Activated naive CD4-positive, alpha-beta T cell treated with anti-CD3 and anti-CD28 coated beads for 36 hours (primary cell): ENCODE measurements at regions of chr2 and their contacts with region 1.

Region 1: DNA sequence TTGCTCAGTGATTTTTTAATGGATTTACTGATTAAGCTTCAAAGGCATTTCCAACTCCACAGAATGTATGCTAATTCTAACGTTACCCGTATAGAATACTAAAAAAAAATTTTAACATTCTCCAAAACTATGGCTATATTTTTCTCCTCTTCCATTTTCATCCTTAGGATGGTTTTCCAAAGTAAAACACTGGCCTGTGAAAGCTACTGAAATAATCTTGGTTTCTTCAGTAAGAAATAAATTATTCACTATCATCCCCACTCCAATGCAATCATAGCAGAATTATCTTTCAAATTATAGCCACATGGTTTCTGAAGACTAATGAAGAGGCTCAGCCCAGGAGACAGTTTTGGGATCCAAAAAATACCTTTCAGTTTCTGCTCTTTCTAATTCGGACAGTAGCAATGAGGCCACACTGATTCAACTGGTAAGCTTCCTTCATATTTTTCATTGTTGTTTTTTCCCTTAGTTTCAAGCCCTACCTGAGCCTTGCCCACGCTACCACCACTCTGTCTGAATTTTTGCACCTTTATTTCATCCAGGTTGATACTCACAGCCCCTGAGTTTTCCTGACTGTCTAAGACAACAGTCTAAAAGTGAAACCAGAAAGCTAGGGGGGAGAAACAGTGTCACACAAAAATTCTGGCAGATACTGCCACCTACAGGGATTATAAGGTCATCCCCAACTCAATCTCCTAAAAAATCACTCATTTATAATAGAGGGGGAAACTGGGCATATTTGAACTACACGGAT is 887.9 kb downstream of the NRXN1 start:
- DNase-seq: no peak
- H3K4me3 Mint-ChIP-seq: no peak overlapping the region
- H3K27ac Mint-ChIP-seq: no peak overlapping the region
- H3K4me1 Mint-ChIP-seq: peaks cover 5% of the 10 kb centered on the region
- H3K27me3 Mint-ChIP-seq: no peaks in the 10 kb centered on the region

Region 2: GRCh38 chr2:48600204-48600813 is 1543.7 kb before region 1 on chr2:
- CTCF ChIA-PET with region 1: no interaction called
- intact Hi-C with region 1: loop called (anchors 5 kb)
- DNase-seq: no peak
- H3K4me3 Mint-ChIP-seq: no peak overlapping the region
- H3K27ac Mint-ChIP-seq: no peak overlapping the region
- H3K4me1 Mint-ChIP-seq: no peaks in the 10 kb centered on the region
- H3K27me3 Mint-ChIP-seq: peaks cover 4% of the 10 kb centered on the region

Region 3: GRCh38 chr2:49687918-49688317 is 456.1 kb before region 1 on chr2:
- CTCF ChIA-PET with region 1: interaction called, 3 read pairs
- intact Hi-C with region 1: loop called (anchors 1 kb)
- DNase-seq: no peak
- H3K4me3 Mint-ChIP-seq: no peak overlapping the region
- H3K27ac Mint-ChIP-seq: no peak overlapping the region
- H3K4me1 Mint-ChIP-seq: no peaks in the 10 kb centered on the region
- H3K27me3 Mint-ChIP-seq: no peaks in the 10 kb centered on the region

Region 4: DNA sequence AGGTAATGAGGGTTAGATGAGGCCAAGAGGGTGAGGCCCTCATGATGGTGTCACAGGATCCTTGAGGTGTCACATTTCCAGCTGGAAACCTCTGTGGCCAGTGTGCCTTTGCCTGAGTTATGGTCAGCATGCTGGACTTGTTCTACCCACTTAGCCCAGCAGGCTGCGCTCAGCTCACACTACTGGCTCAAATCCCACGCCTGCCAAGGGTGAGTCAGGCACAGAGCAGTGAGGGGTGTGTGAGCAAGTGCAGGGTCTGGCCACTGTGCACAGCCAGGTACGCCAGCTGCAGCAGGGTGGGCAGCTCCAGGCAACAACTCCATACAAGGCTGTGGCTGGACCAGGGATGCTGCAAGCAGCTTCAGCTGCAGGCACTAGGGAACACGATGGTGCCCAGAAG is 373.1 kb before region 1 on chr2:
- CTCF ChIA-PET with region 1: no interaction called
- intact Hi-C with region 1: loop called (anchors 2 kb)
- DNase-seq: peak; percentile 9
- H3K4me3 Mint-ChIP-seq: no peak overlapping the region
- H3K27ac Mint-ChIP-seq: no peak overlapping the region
- H3K4me1 Mint-ChIP-seq: no peaks in the 10 kb centered on the region
- H3K27me3 Mint-ChIP-seq: no peaks in the 10 kb centered on the region

Region 5: GRCh38 chr2:49807689-49808088 is 336.3 kb before region 1 on chr2:
- CTCF ChIA-PET with region 1: no interaction called
- intact Hi-C with region 1: no loop called
- DNase-seq: no peak
- H3K4me3 Mint-ChIP-seq: no peak overlapping the region
- H3K27ac Mint-ChIP-seq: no peak overlapping the region
- H3K4me1 Mint-ChIP-seq: no peaks in the 10 kb centered on the region
- H3K27me3 Mint-ChIP-seq: no peaks in the 10 kb centered on the region

Region 6: GRCh38 chr2:50401772-50402653 is 258.0 kb after region 1 on chr2:
- CTCF ChIA-PET with region 1: no interaction called
- intact Hi-C with region 1: loop called (anchors 5 kb)
- DNase-seq: peak; percentile 59
- H3K4me3 Mint-ChIP-seq: no peak overlapping the region
- H3K27ac Mint-ChIP-seq: no peak overlapping the region
- H3K4me1 Mint-ChIP-seq: no peaks in the 10 kb centered on the region
- H3K27me3 Mint-ChIP-seq: no peaks in the 10 kb centered on the region